AG04450 (cell line): ENCODE measurements at regions of chr14 and their contacts with region 1.

Region 1: GRCh38 chr14:65824285-65824977 is 411.9 kb downstream of the FUT8 start:
- DNase-seq: peak; percentile 41
- H3K4me3 ChIP-seq: no peak overlapping the region
- H3K27ac ChIP-seq: no peak overlapping the region
- H3K27me3 ChIP-seq: peaks cover 21% of the 10 kb centered on the region
- CTCF ChIP-seq: peak; percentile 97

Region 2: GRCh38 chr14:65156568-65157366 is 667.7 kb before region 1 on chr14:
- CTCF ChIA-PET with region 1: interaction called, 24 read pairs
- POLR2A ChIA-PET with region 1: no interaction called
- DNase-seq: peak; percentile 34
- H3K4me3 ChIP-seq: no peak overlapping the region
- H3K27ac ChIP-seq: peak overlapping the region; percentile 65
- H3K27me3 ChIP-seq: peaks cover 3% of the 10 kb centered on the region
- CTCF ChIP-seq: no peak

Region 3: DNA sequence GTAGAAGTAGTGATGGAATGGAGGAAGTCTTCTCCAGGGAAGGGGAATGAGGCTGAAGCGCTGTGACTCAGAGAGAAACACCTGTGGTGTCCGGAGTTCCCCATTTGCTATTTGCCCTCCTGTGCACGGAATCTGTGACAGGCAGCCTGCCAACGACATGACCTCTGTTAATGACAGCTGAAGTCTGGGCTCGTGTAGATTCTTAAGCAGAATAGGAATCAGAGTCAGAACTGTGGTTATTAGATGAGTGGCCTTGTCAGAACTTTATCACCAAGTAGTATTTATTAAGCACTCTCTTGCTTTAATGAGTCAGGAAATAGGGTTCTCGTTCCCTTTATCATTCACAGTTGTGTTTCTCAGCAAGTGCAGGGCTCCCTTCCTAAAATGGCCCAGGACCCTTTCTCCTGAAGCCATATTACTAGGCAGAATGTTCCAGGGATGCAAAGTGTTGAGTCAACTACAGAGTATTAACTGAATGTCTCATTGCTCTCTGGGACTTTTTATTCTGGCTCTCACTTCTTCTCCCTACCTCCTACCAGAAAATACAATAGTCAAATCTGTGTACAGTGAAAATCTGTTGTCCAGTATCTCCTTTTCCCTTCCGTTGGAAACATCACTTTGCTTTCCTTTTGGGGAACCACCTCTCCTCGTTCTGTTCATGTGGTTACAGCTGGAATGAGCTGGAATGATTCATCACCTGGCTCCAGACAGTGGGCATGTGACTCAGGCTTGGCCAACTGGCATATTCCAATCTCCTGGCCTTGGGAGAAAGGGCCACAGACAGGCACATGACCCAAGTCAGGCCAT is 644.3 kb before region 1 on chr14:
- CTCF ChIA-PET with region 1: interaction called, 12 read pairs
- POLR2A ChIA-PET with region 1: no interaction called
- DNase-seq: peak; percentile 65
- H3K4me3 ChIP-seq: no peak overlapping the region
- H3K27ac ChIP-seq: peak overlapping the region; percentile 68
- H3K27me3 ChIP-seq: no peaks in the 10 kb centered on the region
- CTCF ChIP-seq: no peak

Region 4: GRCh38 chr14:65794674-65795279 is 29.7 kb before region 1 on chr14:
- CTCF ChIA-PET with region 1: interaction called, 15 read pairs
- POLR2A ChIA-PET with region 1: no interaction called
- DNase-seq: no peak
- H3K4me3 ChIP-seq: no peak overlapping the region
- H3K27ac ChIP-seq: no peak overlapping the region
- H3K27me3 ChIP-seq: peaks cover 3% of the 10 kb centered on the region
- CTCF ChIP-seq: no peak

Region 5: GRCh38 chr14:65840118-65840751 is 15.8 kb after region 1 on chr14:
- CTCF ChIA-PET with region 1: interaction called, 16 read pairs
- POLR2A ChIA-PET with region 1: no interaction called
- DNase-seq: no peak
- H3K4me3 ChIP-seq: no peak overlapping the region
- H3K27ac ChIP-seq: no peak overlapping the region
- H3K27me3 ChIP-seq: peaks cover 2% of the 10 kb centered on the region
- CTCF ChIP-seq: no peak

Region 6: DNA sequence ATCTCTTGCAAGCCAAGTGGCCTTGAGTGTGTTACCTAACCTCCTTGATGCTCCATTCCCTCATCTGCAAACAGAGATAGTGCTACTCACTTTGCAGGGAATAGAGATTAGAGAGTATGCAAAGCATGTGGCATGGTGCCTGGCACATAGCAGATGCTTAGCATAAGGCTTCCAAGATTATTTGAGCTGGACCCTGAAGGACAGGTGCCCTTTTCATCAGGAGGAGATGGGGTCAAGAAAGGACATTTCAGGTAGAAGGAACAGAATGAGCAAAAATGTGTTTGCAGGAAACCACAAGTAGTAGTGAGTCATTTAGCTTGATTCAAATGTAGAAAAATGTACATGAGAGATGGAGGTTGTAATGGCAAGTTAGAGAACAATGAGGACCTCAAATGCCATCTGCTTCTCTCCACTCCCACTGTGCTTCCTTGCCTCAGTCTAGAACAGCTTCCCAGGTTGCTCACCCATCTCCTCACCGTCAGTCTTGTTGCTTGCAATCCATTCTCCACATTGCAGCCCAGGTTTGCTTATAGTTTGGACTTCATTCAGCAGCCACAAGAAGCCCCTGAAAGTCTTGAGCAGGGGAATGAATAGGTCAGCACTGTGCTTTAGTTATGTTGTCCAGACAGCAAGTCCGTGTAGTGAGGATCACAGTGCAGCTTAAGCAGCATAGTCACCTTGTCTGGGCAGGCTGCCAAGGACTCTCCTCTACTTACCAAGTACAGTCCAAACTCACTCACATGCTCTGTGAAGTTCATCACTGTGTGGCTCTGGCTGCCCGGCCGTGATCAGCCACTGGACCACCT is 125.5 kb after region 1 on chr14:
- CTCF ChIA-PET with region 1: no interaction called
- POLR2A ChIA-PET with region 1: no interaction called
- DNase-seq: no peak
- H3K4me3 ChIP-seq: no peak overlapping the region
- H3K27ac ChIP-seq: no peak overlapping the region
- H3K27me3 ChIP-seq: no peaks in the 10 kb centered on the region
- CTCF ChIP-seq: no peak

Region 7: DNA sequence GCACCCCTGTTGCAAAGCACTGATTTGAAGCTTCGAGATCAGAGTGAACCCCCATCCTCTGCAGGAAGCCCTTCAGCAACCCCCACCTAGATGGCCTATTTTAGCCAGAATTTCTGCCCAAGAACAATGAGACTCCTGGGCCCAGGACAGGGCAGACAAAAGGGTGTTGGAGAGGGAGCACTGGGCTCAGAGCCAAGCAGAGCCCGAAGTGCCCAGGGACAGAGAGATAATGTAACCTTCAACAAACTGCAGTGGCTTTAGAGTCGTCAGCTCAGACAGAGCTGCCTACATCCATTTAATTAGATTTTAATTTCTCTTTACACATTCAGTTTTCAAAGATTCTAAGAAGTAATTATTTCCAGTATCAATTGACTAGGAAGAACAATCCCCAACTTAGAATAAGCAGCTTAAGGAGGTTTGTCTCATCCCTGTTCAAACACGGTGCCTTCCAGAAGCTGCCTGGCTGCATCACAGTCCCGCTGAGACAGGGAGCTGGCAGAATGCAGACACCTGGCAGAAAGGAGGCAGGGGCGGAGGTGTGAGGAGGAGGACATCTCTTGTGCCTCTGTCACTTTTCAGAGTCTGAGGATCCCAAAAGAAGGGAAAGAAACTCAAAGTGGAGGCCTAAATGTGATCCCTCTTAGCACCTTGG is 156.9 kb after region 1 on chr14:
- CTCF ChIA-PET with region 1: no interaction called
- POLR2A ChIA-PET with region 1: no interaction called
- DNase-seq: no peak
- H3K4me3 ChIP-seq: no peak overlapping the region
- H3K27ac ChIP-seq: no peak overlapping the region
- H3K27me3 ChIP-seq: no peaks in the 10 kb centered on the region
- CTCF ChIP-seq: no peak